KBM-7 (cell line): ENCODE measurements at regions of chr1 and their contacts with region 1.

Region 1: DNA sequence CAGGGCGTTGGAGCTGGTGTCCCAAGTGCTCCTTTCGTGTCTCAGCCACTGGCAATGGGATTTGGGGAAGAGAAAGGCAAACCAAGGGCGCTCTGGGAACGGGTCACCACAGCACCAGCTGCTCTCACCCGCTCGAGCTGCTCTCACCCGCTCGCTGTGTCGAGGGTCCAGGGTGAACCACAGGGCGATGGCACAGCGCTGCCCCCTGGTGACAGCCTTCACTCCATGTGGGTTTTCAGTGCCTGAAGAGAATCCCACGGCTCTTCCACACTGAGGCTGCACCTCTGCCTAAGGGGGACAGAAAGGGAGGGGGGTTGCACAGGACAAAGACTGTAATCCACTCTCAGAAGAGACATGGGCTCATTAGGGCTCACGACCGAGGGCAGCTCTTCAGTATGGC is 7.1 kb upstream of the CLDN19 start:
- DNase-seq: peak; percentile 47

Region 2: GRCh38 chr1:42335050-42335808 is 411.9 kb before region 1 on chr1 and contains the start of gene FOXJ3:
- in situ Hi-C with region 1: loop called (anchors 25 kb)
- DNase-seq: peak; percentile 89

Region 3: GRCh38 chr1:42576935-42577334 is 170.2 kb before region 1 on chr1:
- in situ Hi-C with region 1: loop called (anchors 10 kb)
- DNase-seq: no peak

Region 4: DNA sequence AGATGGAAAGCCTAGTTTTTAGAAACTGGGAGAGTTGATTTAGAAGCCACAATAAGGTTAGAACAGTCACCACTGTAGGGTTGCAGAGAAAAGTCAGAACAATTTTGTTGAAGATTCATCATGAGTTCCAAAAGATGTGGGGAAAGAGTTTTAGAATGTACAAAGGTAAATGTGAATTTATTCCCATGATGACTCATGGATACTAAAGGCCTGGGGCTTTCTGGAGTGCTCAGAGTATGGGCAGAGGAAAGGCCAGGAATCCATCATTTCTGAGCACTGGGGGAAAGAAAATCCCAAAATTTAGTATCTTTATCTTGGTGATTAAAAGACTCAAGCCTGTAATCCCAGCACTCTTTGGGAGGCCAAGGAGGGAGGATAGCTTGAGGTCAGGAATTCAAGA is 47.1 kb before region 1 on chr1:
- in situ Hi-C with region 1: no loop called
- DNase-seq: no peak

Region 5: GRCh38 chr1:42846257-42847110 is 99.4 kb after region 1 on chr1 and contains the start of gene ZNF691:
- in situ Hi-C with region 1: no loop called
- DNase-seq: peak; percentile 98